ENCODE measurements at regions of chr19 and their contacts with region 1.

Region 1: GRCh38 chr19:1285737-1286360 is at the start of gene EFNA2:
- DNase-seq: no peak
- ATAC-seq: no peak
- H3K4me3 ChIP-seq: peak within 1 kb of the TSS in 1 of 10 donors; percentile 15
- H3K27ac ChIP-seq: no peak within 1 kb of the TSS
- H3K4me1 ChIP-seq: peaks cover 0 to 16% (median 3%) of the 10 kb centered on the region in 9 donors
- H3K27me3 ChIP-seq: peaks cover 22 to 76% (median 71%) of the 10 kb centered on the region in 7 donors
- CTCF ChIP-seq: no peak
- total RNA-seq, gene EFNA2: 0.45 TPM in 1 of 10 donors, not detected in the others

Region 2: GRCh38 chr19:1324806-1325567 is 39.1 kb after region 1 on chr19:
- intact Hi-C with region 1: no loop called
- DNase-seq: peak; percentile 57 to 65
- ATAC-seq: peak; percentile 61 to 86 (median 81)
- H3K4me3 ChIP-seq: peak overlapping the region in 9 of 10 donors; percentile 29 to 57 (median 51)
- H3K27ac ChIP-seq: peak overlapping the region in 3 of 10 donors; percentile 13 to 39 (median 19)
- H3K4me1 ChIP-seq: peaks cover 0 to 14% (median 12%) of the 10 kb centered on the region in 9 donors
- H3K27me3 ChIP-seq: peaks cover 0 to 47% (median 33%) of the 10 kb centered on the region in 7 donors
- CTCF ChIP-seq: no peak

Region 3: GRCh38 chr19:1360818-1361461 is 75.1 kb after region 1 on chr19:
- intact Hi-C with region 1: loop called in 5 of 10 experiments (anchors 5 to 10 kb)
- DNase-seq: peak; percentile 62 to 80
- ATAC-seq: peak; percentile 78 to 91 (median 80)
- H3K4me3 ChIP-seq: peak overlapping the region in 9 of 10 donors; percentile 4 to 40 (median 36)
- H3K27ac ChIP-seq: peak overlapping the region; percentile 20 to 81 (median 59)
- H3K4me1 ChIP-seq: peaks cover 12 to 40% (median 33%) of the 10 kb centered on the region in 9 donors
- H3K27me3 ChIP-seq: no peaks in the 10 kb centered on the region
- CTCF ChIP-seq: peak in 1 of 9 donors; percentile 6

Measured in heart right ventricle (tissue), 16 donors.